Colonic mucosa (tissue), 4 donors: ENCODE measurements at regions of chr6 and their contacts with region 1.

Region 1: GRCh38 chr6:56708810-56709597 is 66.3 kb upstream of the DST start:
- DNase-seq: no peak
- H3K4me3 ChIP-seq: no peak overlapping the region
- H3K27ac ChIP-seq: no peak overlapping the region
- H3K4me1 ChIP-seq: no peaks in the 10 kb centered on the region
- H3K27me3 ChIP-seq: no peaks in the 10 kb centered on the region
- CTCF ChIP-seq: peak; percentile 61

Region 2: DNA sequence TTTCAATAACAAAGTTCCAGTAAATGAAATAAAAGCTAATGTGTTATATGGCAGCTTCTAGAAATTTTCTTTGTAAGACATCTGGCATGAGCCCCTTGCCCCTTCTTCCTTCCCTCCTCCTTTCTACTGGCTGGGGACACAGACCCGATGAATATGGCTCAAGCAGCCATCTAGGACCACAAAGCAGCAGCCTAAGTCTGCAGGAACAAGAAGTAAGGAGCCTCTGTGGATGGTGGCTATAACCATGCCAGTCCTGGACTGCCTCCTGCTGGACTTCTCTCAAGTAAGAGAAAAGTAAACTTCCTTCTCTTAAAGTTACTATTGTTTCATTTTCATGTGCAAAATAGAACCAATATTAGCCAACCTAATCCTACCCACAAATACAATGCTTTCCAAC is 48.6 kb after region 1 on chr6:
- intact Hi-C with region 1: loop called (anchors 2 kb)
- DNase-seq: peak; percentile 34
- H3K4me3 ChIP-seq: no peak overlapping the region
- H3K27ac ChIP-seq: no peak overlapping the region
- H3K4me1 ChIP-seq: no peaks in the 10 kb centered on the region
- H3K27me3 ChIP-seq: no peaks in the 10 kb centered on the region
- CTCF ChIP-seq: peak; percentile 33

Region 3: DNA sequence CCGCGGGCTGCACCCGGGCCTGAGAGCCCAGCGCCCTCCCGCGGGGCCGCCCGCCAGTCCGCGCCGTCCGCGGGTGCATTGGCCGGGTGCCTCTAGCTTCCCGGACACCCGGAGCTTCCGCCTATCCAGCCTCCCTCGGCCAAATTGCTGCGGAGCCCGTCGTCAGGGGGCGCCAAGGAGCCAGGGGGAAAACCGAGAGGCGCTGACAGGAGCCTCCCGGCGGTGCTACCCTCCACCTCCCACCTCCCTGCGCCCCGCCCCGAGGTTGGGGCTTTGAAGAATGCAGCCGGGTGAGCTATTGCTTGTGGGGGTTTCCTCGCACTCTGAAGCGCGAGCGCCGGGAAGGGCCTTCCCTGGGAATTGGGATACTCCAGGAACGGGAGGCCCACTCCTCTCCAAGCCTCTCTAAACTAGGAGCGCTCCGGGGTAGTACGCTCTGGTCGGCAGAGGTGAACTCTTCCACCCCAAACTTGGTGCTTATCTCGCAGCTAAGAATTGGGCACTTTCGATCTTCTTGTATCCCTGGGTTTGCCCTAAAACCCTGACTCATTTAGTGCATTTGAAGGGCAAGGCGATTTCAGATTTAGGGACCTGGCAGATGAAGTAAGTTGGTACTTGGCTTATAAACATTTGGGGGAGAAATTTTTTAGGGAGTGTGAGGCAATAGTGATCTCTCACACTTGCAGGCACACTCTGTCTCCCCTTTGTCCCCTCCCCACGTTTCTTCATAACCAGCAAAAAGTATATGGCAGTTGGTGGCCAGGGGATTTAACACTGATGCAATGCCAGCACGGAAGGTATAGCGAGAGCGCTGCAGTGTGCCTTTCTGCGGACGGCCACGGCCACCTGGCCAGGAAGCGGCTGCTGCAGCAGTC is 246.4 kb after region 1 on chr6:
- intact Hi-C with region 1: no loop called
- DNase-seq: peak; percentile 89
- H3K4me3 ChIP-seq: peak overlapping the region; percentile 40
- H3K27ac ChIP-seq: peak overlapping the region; percentile 44
- H3K4me1 ChIP-seq: no peaks in the 10 kb centered on the region
- H3K27me3 ChIP-seq: peaks cover 18% of the 10 kb centered on the region
- CTCF ChIP-seq: peak; percentile 54